ENCODE measurements at regions of chr15 and their contacts with region 1.

Region 1: DNA sequence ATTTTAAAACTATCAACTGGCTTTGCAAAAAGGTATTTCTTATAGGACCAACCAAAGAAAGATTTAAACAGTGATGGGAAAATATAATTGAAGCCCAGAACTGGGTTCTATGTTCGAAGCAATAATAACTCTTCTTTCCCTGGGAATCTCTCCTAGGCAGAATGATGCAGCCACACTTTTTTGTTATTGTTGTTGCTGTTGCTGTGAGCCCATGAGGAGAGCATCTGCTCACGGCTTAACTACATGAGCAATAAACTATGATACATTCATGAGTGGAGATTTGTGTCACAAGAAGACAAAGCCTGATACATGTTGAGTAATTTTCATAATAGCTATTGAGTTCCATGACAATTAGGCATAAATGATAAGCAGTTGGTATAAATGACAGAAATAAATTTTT is 80.5 kb downstream of the CRTC3 start:
- DNase-seq: no peak
- H3K4me3 ChIP-seq: no peak overlapping the region
- H3K27ac ChIP-seq: peak overlapping the region in 1 of 2 donors; percentile 4
- H3K4me1 ChIP-seq: no peaks in the 10 kb centered on the region
- H3K27me3 ChIP-seq: no peaks in the 10 kb centered on the region
- CTCF ChIP-seq: no peak
- POLR2A ChIP-seq: no peak

Region 2: GRCh38 chr15:90529371-90530249 is 80.6 kb before region 1 on chr15 and contains the start of gene CRTC3:
- intact Hi-C with region 1: loop called (anchors 5 kb)
- DNase-seq: peak; percentile 25
- H3K4me3 ChIP-seq: peak within 1 kb of the TSS; percentile 78 to 80
- H3K27ac ChIP-seq: peak within 1 kb of the TSS; percentile 90 to 91
- H3K4me1 ChIP-seq: no peaks in the 10 kb centered on the region
- H3K27me3 ChIP-seq: no peaks in the 10 kb centered on the region
- CTCF ChIP-seq: peak in 1 of 4 experiments; percentile 12
- POLR2A ChIP-seq: peak; percentile 38
- total RNA-seq, gene CRTC3: 26.6 to 87.8 TPM

Region 3: GRCh38 chr15:90924375-90924774 is 314.2 kb after region 1 on chr15:
- intact Hi-C with region 1: no loop called
- DNase-seq: no peak
- H3K4me3 ChIP-seq: no peak overlapping the region
- H3K27ac ChIP-seq: no peak overlapping the region
- H3K4me1 ChIP-seq: no peaks in the 10 kb centered on the region
- H3K27me3 ChIP-seq: no peaks in the 10 kb centered on the region
- CTCF ChIP-seq: no peak
- POLR2A ChIP-seq: no peak